ENCODE measurements at regions of chr15 and their contacts with region 1.

Region 1: DNA sequence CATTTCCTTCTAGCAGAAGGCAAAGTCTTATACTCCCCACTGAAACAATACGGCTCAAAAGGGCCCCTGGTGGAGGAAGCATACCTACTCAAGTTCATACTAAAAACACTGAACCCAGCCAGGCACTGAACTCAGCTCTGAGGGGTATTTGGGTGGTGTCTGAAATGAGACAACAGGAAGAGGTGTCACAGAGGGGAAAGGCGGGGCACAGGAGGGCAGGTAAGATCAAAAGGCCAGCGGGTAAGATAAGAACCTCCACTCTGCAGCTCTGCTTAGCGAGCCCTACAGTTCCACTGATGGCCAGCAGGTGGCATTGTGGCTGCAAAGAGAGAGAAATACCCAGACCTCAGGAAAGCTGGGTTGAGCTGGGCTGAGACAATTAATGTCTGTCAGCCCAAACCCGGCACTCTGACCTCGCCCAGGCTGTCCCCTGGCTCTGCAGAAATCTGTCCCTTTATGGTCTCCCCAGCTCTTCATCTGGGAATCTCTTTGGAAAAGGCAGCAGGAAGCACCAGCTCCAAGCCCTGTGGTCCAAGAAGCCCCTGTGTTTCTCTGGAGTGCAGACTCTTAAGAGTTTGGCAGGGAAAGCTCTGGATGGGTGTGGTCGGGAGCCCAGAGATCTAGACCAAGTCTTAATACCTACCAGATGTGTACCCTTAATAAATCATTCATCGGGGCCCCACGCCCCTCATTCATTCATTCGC is 8.4 kb downstream of the MFGE8 start:
- DNase-seq: peak; percentile 86
- H3K4me3 ChIP-seq: no peak overlapping the region
- H3K27ac ChIP-seq: no peak overlapping the region
- H3K4me1 ChIP-seq: peaks cover 4% of the 10 kb centered on the region
- H3K27me3 ChIP-seq: no peaks in the 10 kb centered on the region
- CTCF ChIP-seq: peak; percentile 98

Region 2: DNA sequence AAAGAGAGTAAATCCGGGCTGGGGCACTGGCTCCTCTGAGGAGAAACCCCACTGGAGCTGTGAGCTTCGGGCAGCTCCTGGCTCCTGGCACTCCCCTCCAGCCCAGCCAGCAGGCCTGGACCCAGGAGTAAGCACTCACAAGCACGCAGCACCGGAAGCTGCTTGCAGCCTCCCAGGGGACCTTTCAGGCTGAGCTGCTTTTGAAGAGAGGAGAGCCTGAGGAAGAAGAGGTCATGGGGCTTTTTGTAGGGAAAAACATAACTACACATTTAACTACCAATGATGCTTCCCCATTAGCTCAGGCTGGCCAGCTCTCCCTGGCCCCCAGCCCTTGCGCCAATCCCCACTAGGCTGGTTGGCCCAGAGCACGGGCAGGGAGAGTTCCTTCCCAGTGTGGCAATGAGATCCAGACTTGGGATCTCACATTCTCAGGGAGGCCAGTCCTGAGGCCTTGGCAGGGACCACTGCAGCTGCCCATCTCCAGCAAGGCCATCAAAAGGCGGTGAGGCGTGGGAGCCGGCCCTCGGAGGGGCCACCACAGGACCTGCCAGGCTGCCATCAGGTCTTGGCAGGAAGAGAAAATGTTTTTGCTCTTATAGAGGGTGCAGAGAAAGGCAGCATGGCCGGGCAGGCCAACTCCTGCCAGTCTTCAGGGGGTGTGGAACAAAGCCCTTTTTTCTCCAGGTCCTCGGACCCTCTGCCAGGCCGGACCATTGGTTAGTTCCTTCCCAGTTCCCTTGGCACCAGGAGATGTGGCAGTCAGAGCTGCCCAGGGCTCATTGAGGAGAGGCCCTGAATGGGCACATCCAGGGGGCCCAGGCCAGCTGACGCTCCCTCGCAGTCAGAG is 49.9 kb after region 1 on chr15:
- intact Hi-C with region 1: no loop called
- DNase-seq: no peak
- H3K4me3 ChIP-seq: no peak overlapping the region
- H3K27ac ChIP-seq: no peak overlapping the region
- H3K4me1 ChIP-seq: no peaks in the 10 kb centered on the region
- H3K27me3 ChIP-seq: no peaks in the 10 kb centered on the region
- CTCF ChIP-seq: no peak

Region 3: GRCh38 chr15:89017370-89018066 is 112.7 kb after region 1 on chr15:
- intact Hi-C with region 1: loop called (anchors 2 kb)
- DNase-seq: peak; percentile 80
- H3K4me3 ChIP-seq: no peak overlapping the region
- H3K27ac ChIP-seq: no peak overlapping the region
- H3K4me1 ChIP-seq: no peaks in the 10 kb centered on the region
- H3K27me3 ChIP-seq: peaks cover 4% of the 10 kb centered on the region
- CTCF ChIP-seq: peak; percentile 67

Region 4: DNA sequence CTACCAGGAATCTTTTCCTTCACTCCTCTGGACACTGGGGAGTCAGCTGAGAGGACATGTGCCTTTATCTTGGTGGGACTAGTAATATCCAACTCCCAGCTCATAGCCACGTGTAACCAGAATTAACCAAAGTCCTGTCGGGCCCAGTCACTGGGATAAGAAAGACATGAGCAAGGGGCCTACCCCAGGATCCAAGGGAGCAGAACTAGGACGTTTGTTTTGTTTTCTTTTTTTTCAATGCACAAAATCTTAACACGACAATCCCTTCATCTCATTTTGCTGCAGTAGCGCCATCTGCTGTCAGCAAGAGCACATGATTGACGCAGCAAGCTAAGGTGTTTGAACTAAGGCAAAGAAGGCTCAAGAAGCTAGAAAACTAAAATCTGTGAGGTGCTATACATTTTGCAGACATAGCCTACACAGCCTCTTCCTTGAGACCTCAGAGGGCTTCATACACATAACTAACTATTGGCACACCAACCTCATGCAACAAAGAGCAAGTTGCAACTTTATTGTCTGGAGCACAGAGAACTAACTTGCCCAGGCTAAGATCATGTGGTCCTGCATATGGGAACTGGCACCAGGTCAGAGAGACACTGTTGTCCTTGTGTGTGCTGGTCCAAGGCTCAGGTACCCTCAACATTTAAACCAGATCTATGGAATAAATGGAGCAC is 273.0 kb after region 1 on chr15:
- intact Hi-C with region 1: loop called (anchors 5 kb)
- DNase-seq: peak; percentile 55
- H3K4me3 ChIP-seq: no peak overlapping the region
- H3K27ac ChIP-seq: no peak overlapping the region
- H3K4me1 ChIP-seq: no peaks in the 10 kb centered on the region
- H3K27me3 ChIP-seq: no peaks in the 10 kb centered on the region
- CTCF ChIP-seq: peak; percentile 73

Measured in colonic mucosa (tissue), 4 donors.